ENCODE measurements at regions of chr3 and their contacts with region 1.

Region 1: DNA sequence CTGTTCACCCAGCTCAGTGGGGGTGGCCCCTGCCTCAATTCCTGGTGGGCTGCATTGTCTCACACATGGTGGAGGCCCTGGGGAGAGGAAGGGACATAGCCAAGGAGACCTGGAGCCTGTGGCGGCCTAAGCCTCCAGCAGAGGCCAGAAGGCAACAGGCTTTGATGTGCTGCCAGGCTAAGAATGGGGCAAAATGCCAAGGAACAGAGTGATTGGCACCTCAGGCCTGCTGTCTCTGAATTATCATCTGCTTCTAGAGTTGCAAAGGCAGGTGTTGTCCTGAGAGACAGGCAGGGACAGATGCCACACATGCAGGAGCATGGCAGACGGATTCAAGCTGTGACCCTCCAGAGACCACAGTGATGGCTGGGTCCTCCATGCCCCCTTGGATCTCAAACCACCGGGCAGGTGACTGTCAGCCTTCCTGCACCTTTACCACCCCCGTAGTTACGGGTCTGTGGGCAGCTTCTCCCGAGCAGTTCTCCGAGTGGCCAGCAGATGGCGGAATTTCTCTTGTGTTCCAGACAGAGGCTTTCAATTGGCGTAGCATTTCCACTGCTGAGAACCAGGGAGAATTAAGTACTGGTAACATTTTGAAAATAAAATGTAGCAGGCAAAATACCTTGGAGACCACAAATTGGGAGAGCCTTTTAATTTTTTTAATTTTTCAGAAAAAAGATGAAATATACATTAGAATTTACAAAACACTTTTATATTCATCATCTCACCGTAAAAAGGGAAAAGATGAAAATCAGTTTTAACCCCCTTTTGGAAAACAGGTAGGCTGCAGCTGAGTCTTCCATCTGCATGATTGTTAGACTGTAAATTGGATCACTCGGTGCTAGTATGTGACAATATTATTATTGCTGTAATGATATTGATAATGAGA is 525.5 kb upstream of the CFAP20DC start:
- DNase-seq: peak; percentile 95
- H3K4me3 Mint-ChIP-seq: no peak overlapping the region
- H3K27ac Mint-ChIP-seq: no peak overlapping the region
- H3K4me1 Mint-ChIP-seq: peaks cover 14% of the 10 kb centered on the region
- H3K27me3 Mint-ChIP-seq: no peaks in the 10 kb centered on the region

Region 2: DNA sequence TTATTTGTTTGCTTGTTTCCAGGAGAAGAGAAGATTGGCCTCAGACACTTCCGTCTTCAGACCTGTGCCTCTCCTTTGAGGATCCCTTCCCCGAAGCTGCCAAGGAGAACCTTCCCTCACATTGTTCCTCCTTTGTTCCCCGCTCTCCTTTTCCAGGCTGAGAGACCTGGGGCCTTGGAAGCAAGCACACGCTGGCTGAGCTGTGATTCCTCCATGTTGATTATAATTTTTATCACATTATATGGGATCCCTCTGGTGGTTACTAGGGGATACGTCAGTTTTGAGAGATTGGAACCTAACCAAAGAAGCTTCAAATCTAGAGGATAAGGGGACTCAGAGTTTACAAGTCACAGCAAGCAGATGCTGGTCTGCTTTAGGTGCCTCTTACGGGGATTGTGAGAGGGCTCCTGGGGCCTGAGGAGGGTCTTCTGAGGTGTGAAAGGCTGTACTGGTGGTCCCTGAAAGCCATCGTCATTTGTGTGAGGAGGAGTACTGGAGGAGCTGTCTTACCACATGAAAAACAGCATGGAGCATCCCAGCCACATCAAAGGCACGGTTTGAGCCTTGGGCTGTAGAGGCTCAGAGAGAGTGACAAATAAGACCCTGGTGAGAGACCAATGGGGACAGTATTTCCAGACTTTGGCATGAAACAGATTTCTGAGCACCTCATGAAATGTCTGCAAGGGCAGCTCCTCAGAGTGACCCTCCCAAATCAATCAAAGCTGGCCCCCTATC is 234.5 kb after region 1 on chr3:
- intact Hi-C with region 1: loop called (anchors 2 kb)
- DNase-seq: no peak
- H3K4me3 Mint-ChIP-seq: no peak overlapping the region
- H3K27ac Mint-ChIP-seq: peak overlapping the region; percentile 29
- H3K4me1 Mint-ChIP-seq: peaks cover 7% of the 10 kb centered on the region
- H3K27me3 Mint-ChIP-seq: no peaks in the 10 kb centered on the region

Region 3: DNA sequence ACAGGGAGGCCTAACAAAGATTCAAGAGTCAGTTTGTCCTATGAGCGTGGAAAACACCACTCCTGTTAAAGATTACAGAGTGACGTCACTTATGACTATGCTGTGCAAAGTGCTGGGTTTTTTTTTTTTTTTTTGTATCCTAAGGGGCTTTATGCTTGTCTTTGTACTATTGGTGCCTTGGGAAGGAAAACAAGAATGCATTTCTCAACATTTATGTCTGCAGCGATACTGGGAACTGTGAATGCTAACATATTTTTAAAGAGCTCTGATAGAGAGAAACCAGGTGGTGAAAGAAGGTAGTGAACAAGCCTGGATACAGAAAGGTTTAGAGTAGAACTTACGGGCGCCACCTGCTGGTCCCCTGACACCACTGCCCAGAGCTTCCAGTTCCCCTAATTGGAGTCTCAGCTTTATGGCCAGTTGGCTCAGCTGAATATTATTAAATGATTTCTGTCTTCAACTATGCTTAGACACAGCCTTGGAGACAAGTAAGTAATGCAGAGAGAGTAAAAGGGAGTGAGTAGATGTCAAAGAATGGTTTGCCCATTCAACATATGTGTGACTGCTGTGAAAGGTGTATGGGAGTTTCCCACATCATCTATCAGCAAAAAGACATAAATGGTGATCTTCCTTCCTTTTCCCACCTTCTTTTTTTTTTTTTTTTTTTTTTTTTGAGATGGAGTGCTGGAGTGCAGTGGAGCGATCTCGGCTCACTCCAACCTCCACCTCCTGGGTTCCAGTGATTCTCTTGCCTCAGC is 282.4 kb after region 1 on chr3:
- intact Hi-C with region 1: loop called (anchors 1 kb)
- DNase-seq: peak; percentile 91
- H3K4me3 Mint-ChIP-seq: no peak overlapping the region
- H3K27ac Mint-ChIP-seq: peak overlapping the region; percentile 59
- H3K4me1 Mint-ChIP-seq: peaks cover 13% of the 10 kb centered on the region
- H3K27me3 Mint-ChIP-seq: no peaks in the 10 kb centered on the region

Region 4: GRCh38 chr3:60036803-60037202 is 461.4 kb after region 1 on chr3:
- intact Hi-C with region 1: no loop called
- DNase-seq: no peak
- H3K4me3 Mint-ChIP-seq: no peak overlapping the region
- H3K27ac Mint-ChIP-seq: no peak overlapping the region
- H3K4me1 Mint-ChIP-seq: peaks cover 12% of the 10 kb centered on the region
- H3K27me3 Mint-ChIP-seq: no peaks in the 10 kb centered on the region

Region 5: GRCh38 chr3:61381745-61382392 is 1806.5 kb after region 1 on chr3:
- intact Hi-C with region 1: loop called (anchors 5 kb)
- DNase-seq: peak; percentile 67
- H3K4me3 Mint-ChIP-seq: no peak overlapping the region
- H3K27ac Mint-ChIP-seq: no peak overlapping the region
- H3K4me1 Mint-ChIP-seq: peaks cover 3% of the 10 kb centered on the region
- H3K27me3 Mint-ChIP-seq: peaks cover 18% of the 10 kb centered on the region

Measured in activated CD4-positive, alpha-beta T cell treated with anti-CD3 and anti-CD28 coated beads, Interleukin-2, amount 10 ng/mL, durations not matched to agents 24 days and 14 days (primary cell).